ENCODE measurements at regions of chr7 and their contacts with region 1.

Region 1: DNA sequence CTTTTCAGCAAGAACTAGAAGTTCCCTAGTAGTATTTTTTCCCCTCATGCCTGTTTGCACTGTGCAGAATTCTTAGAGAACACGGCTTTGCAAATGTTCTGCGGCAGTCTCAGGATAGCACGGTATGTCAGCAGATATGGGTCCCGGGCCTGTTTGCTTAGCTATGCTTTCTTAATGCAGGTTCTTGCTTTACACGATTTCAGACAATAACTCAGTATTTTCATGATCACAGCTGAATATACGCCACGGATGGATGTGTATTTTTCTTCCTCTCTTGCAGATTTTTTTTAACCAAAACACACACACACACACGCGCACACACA is 137.3 kb downstream of the HECW1 start:
- DNase-seq: no peak
- H3K4me3 ChIP-seq: no peak overlapping the region
- H3K27ac ChIP-seq: no peak overlapping the region
- H3K4me1 ChIP-seq: no peaks in the 10 kb centered on the region
- H3K27me3 ChIP-seq: no peaks in the 10 kb centered on the region
- CTCF ChIP-seq: no peak
- POLR2A ChIP-seq: no peak

Region 2: DNA sequence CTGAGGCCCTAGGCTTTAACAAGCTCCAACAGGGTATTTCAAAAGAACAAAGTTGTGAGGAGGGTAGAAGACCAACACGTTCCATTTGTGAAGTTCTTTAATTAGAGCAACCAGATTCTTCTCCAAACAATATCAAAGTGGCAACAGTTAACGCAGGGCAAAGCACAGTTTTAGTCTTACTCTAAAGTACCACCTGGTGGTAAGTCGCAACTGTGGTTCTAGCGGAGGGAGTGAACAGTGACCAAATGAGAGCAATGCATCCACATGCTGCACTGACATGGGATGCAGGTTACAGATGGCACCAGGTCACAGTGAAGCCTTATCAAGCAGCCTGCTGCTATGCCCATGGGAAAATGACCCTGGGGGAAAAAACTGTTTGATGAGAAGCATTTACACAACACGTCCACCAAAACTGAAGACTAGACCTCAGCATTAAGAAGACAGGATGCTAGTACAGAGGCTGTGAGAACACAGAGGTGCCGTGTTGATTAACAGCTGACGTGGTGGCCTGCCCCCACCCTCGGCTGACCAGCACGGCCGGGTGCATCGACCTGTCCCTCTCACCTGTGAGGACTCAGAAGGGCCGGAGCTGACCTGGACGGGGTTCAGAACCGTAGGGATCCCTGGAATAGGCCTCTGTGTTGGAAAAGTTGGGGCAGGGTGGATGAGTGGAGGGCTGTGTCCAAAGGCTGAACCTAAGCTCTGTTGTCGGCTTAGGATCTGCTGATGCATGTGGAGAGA is 1224.0 kb before region 1 on chr7:
- intact Hi-C with region 1: loop called (anchors 10 kb)
- DNase-seq: no peak
- H3K4me3 ChIP-seq: no peak overlapping the region
- H3K27ac ChIP-seq: no peak overlapping the region
- H3K4me1 ChIP-seq: no peaks in the 10 kb centered on the region
- H3K27me3 ChIP-seq: no peaks in the 10 kb centered on the region
- CTCF ChIP-seq: no peak
- POLR2A ChIP-seq: no peak

Region 3: DNA sequence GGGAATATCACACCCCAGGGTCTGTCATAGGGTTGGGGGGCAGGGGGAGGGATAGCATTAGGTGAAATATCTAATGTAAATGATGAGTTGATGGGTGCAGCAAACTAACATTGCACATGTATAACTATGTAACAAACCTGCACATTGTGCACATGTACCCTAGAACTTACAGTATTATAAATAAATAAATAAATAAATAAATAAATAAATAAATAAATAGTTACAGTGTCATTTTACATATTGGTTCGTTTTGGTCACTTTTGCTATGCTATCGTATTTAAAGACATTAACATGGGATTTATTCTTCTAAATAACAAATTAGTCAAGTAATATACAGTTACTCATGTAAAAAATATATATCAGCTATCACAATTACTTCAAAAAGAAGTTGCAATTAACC is 91.3 kb after region 1 on chr7:
- intact Hi-C with region 1: loop called (anchors 5 kb)
- DNase-seq: no peak
- H3K4me3 ChIP-seq: no peak overlapping the region
- H3K27ac ChIP-seq: no peak overlapping the region
- H3K4me1 ChIP-seq: no peaks in the 10 kb centered on the region
- H3K27me3 ChIP-seq: no peaks in the 10 kb centered on the region
- CTCF ChIP-seq: no peak
- POLR2A ChIP-seq: no peak

Measured in breast epithelium (tissue), 4 donors.